Left lung (tissue), 14 donors: ENCODE measurements at regions of chr11 and their contacts with region 1.

Region 1: DNA sequence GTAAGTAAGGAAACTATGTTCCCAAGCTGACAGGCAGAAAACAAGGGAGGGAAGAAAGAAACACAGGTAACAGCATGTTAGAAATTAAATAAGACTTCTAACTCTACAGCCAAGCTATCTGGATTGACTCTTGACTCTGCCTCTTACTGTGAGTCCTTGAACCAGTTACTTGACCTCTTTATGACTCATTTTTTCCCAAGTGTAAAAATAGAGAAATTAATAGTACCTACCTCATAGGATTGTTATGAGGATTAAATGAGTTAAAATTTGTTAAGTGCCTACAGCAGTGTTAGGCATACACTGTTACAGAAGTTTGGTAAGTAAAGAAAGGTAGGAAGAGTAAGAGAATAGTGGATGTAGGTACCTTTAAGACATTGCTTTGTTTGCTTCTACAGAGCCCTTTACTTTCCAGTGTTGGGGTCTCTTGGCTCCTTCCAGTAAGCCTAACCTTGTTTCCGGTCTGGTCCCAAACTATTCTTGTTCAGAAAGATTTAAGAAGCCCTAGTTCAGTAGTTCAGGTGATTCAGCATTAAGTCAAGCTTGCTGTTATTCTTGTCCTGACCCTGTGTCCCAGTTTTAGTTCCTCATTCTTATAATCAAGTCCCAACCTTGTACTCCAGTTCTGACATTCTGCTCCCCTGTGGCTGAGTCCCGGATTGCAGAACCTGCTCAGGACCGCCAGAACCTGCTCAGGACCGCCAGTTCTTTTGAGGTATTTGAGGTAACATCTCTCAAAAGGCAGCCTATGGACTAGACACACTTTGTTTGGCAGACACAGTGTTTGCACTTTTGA is 963.4 kb upstream of the CCDC90B start:
- DNase-seq: peak in 1 of 4 donors; percentile 40
- ATAC-seq: peak; percentile 85
- H3K4me3 ChIP-seq: no peak overlapping the region
- H3K27ac ChIP-seq: peak overlapping the region; percentile 63 to 68
- H3K4me1 ChIP-seq: no peaks in the 10 kb centered on the region
- H3K27me3 ChIP-seq: no peaks in the 10 kb centered on the region
- CTCF ChIP-seq: no peak

Region 2: GRCh38 chr11:83845797-83846196 is 403.7 kb before region 1 on chr11:
- intact Hi-C with region 1: loop called in 1 of 2 experiments (anchors 10 kb)
- DNase-seq: no peak
- ATAC-seq: no peak
- H3K4me3 ChIP-seq: no peak overlapping the region
- H3K27ac ChIP-seq: no peak overlapping the region
- H3K4me1 ChIP-seq: no peaks in the 10 kb centered on the region
- H3K27me3 ChIP-seq: no peaks in the 10 kb centered on the region
- CTCF ChIP-seq: no peak